CD4-positive, alpha-beta T cell (primary cell): ENCODE measurements at regions of chr11 and their contacts with region 1.

Region 1: GRCh38 chr11:85854557-85855340 is 434 bp upstream of the CCDC83 start:
- DNase-seq: peak; percentile 76 to 96 (median 89)
- ATAC-seq: peak; percentile 97
- H3K4me3 ChIP-seq: peak overlapping the region; percentile 70
- H3K4me3 Mint-ChIP-seq: peak overlapping the region; percentile 91
- H3K27ac ChIP-seq: peak overlapping the region; percentile 68 to 75
- H3K27ac Mint-ChIP-seq: peak overlapping the region; percentile 93
- H3K4me1 ChIP-seq: peaks cover 12% of the 10 kb centered on the region
- H3K4me1 Mint-ChIP-seq: peaks cover 13% of the 10 kb centered on the region
- H3K27me3 ChIP-seq: no peaks in the 10 kb centered on the region
- H3K27me3 Mint-ChIP-seq: no peaks in the 10 kb centered on the region
- CTCF ChIP-seq: peak; percentile 87

Region 2: DNA sequence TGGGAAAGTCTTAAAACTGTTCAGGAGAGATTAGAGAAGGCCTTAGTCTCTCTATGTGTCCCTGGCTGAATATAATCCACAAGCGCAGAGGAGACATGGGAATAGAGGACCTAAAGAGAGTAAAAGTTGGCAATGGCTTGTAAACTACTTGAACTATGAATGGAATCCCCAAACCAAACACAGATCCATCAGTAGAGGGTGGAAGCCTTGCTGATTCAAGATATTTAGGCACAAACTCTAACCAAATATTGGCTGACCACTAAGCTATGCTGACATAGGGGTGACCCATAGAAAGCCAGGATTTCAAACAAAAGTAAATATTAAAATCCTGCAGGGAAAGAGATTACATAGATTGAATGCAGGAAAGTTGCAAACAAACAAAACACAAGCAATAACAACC is 666.8 kb before region 1 on chr11:
- CTCF ChIA-PET with region 1: no interaction called
- POLR2A ChIA-PET with region 1: no interaction called
- intact Hi-C with region 1: no loop called
- DNase-seq: no peak
- ATAC-seq: no peak
- H3K4me3 ChIP-seq: no peak overlapping the region
- H3K4me3 Mint-ChIP-seq: no peak overlapping the region
- H3K27ac ChIP-seq: no peak overlapping the region
- H3K27ac Mint-ChIP-seq: no peak overlapping the region
- H3K4me1 ChIP-seq: no peaks in the 10 kb centered on the region
- H3K4me1 Mint-ChIP-seq: no peaks in the 10 kb centered on the region
- H3K27me3 ChIP-seq: no peaks in the 10 kb centered on the region
- H3K27me3 Mint-ChIP-seq: no peaks in the 10 kb centered on the region
- CTCF ChIP-seq: no peak

Region 3: GRCh38 chr11:85572056-85572455 is 282.7 kb before region 1 on chr11:
- CTCF ChIA-PET with region 1: no interaction called
- POLR2A ChIA-PET with region 1: no interaction called
- intact Hi-C with region 1: no loop called
- DNase-seq: no peak
- ATAC-seq: no peak
- H3K4me3 ChIP-seq: no peak overlapping the region
- H3K4me3 Mint-ChIP-seq: no peak overlapping the region
- H3K27ac ChIP-seq: no peak overlapping the region
- H3K27ac Mint-ChIP-seq: no peak overlapping the region
- H3K4me1 ChIP-seq: no peaks in the 10 kb centered on the region
- H3K4me1 Mint-ChIP-seq: no peaks in the 10 kb centered on the region
- H3K27me3 ChIP-seq: peaks cover 0 to 6% of the 10 kb centered on the region in 2 experiments
- H3K27me3 Mint-ChIP-seq: peaks cover 31% of the 10 kb centered on the region
- CTCF ChIP-seq: no peak

Region 4: GRCh38 chr11:85595285-85595884 is 259.4 kb before region 1 on chr11:
- CTCF ChIA-PET with region 1: no interaction called
- POLR2A ChIA-PET with region 1: interaction called, 3 read pairs
- intact Hi-C with region 1: loop called in 1 of 2 experiments (anchors 5 kb)
- DNase-seq: peak in 3 of 14 experiments; percentile 64 to 73 (median 72)
- ATAC-seq: peak; percentile 60
- H3K4me3 ChIP-seq: no peak overlapping the region
- H3K4me3 Mint-ChIP-seq: no peak overlapping the region
- H3K27ac ChIP-seq: no peak overlapping the region
- H3K27ac Mint-ChIP-seq: no peak overlapping the region
- H3K4me1 ChIP-seq: no peaks in the 10 kb centered on the region
- H3K4me1 Mint-ChIP-seq: no peaks in the 10 kb centered on the region
- H3K27me3 ChIP-seq: no peaks in the 10 kb centered on the region
- H3K27me3 Mint-ChIP-seq: no peaks in the 10 kb centered on the region
- CTCF ChIP-seq: peak; percentile 86

Region 5: DNA sequence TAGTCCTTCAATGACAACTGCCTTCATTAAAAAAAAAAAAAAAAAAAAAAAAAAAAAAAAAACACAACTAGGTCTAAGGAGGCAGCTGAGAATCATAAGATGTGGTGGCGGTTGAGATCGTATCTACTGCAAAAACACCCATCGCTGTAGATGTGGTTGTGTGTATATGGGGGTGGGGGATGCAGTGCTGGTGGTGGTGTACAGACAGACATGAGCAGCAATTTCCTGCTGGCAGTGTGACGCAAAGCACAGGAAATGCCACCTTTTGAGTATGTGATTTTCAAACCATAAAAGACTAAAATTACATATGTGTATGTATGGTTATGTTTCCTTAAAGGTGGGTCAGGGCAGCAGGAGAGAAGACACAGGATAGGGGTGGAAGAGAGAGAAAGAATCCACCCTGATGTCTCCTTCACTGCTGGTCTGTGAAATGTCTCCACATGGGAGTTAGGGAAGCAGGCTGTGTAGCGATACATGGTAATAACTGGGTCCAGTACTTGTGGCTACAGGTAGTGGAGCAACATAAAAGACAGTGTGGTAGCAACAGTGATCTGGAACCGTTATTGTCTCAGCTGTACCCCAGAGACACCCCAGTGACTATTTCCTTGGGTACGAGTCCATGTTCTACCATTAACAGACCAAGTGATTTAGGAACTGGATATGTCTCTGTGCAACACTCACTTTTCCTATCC is 101.7 kb before region 1 on chr11:
- CTCF ChIA-PET with region 1: interaction called, 15 read pairs
- POLR2A ChIA-PET with region 1: interaction called, 6 read pairs
- intact Hi-C with region 1: loop called in 1 of 2 experiments (anchors 1 kb)
- DNase-seq: peak; percentile 70 to 99 (median 84)
- ATAC-seq: peak; percentile 84
- H3K4me3 ChIP-seq: peak overlapping the region; percentile 32
- H3K4me3 Mint-ChIP-seq: peak overlapping the region; percentile 87
- H3K27ac ChIP-seq: peak overlapping the region; percentile 52 to 66
- H3K27ac Mint-ChIP-seq: peak overlapping the region; percentile 91
- H3K4me1 ChIP-seq: peaks cover 77% of the 10 kb centered on the region
- H3K4me1 Mint-ChIP-seq: peaks cover 95% of the 10 kb centered on the region
- H3K27me3 ChIP-seq: no peaks in the 10 kb centered on the region
- H3K27me3 Mint-ChIP-seq: peaks cover 7% of the 10 kb centered on the region
- CTCF ChIP-seq: peak; percentile 22

Region 6: GRCh38 chr11:85772695-85773094 is 82.1 kb before region 1 on chr11:
- CTCF ChIA-PET with region 1: no interaction called
- POLR2A ChIA-PET with region 1: no interaction called
- intact Hi-C with region 1: no loop called
- DNase-seq: no peak
- ATAC-seq: no peak
- H3K4me3 ChIP-seq: no peak overlapping the region
- H3K4me3 Mint-ChIP-seq: no peak overlapping the region
- H3K27ac ChIP-seq: no peak overlapping the region
- H3K27ac Mint-ChIP-seq: no peak overlapping the region
- H3K4me1 ChIP-seq: peaks cover 7% of the 10 kb centered on the region
- H3K4me1 Mint-ChIP-seq: peaks cover 39% of the 10 kb centered on the region
- H3K27me3 ChIP-seq: no peaks in the 10 kb centered on the region
- H3K27me3 Mint-ChIP-seq: no peaks in the 10 kb centered on the region
- CTCF ChIP-seq: no peak

Region 7: DNA sequence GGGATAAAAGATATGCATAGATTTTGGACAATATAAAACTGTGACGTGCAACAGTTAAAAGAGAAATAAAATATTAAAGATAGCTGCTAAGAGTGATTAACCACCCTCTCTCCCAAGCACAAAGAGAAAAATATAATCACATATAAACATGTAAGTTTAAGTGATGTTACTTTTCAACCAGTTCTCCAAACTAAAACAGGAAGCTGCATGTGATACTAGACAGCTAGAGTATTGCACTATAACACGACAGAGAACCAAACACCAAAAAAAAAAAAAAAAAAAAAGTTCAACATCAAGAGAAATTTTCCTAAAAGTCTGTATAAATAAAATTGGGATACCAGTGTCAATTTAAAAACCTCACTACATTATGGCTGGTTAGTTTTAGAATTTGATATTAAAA is 135.0 kb after region 1 on chr11:
- CTCF ChIA-PET with region 1: interaction called, 3 read pairs
- POLR2A ChIA-PET with region 1: no interaction called
- intact Hi-C with region 1: loop called in 1 of 2 experiments (anchors 10 kb)
- DNase-seq: no peak
- ATAC-seq: no peak
- H3K4me3 ChIP-seq: no peak overlapping the region
- H3K4me3 Mint-ChIP-seq: no peak overlapping the region
- H3K27ac ChIP-seq: no peak overlapping the region
- H3K27ac Mint-ChIP-seq: no peak overlapping the region
- H3K4me1 ChIP-seq: no peaks in the 10 kb centered on the region
- H3K4me1 Mint-ChIP-seq: peaks cover 5% of the 10 kb centered on the region
- H3K27me3 ChIP-seq: no peaks in the 10 kb centered on the region
- H3K27me3 Mint-ChIP-seq: no peaks in the 10 kb centered on the region
- CTCF ChIP-seq: no peak

Region 8: DNA sequence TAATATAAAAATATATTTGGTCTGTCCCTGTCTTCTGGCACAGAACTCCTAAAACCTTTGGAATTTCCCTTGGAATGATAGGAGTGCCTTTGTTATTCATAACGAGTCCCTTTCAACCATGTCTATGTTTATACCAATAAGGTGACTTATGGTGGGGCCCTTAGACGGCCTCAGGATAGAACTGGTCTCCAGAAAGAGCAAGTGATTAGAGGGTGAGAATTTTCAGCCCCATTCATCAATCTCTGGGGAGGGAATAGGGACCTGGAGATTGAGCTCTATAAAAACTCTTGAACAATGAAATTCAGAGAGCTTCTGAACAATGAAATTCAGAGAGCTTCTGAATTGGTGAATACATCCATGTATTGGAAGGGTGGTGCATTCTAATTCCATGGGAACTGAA is 232.5 kb after region 1 on chr11:
- CTCF ChIA-PET with region 1: no interaction called
- POLR2A ChIA-PET with region 1: no interaction called
- intact Hi-C with region 1: no loop called
- DNase-seq: no peak
- ATAC-seq: no peak
- H3K4me3 ChIP-seq: no peak overlapping the region
- H3K4me3 Mint-ChIP-seq: no peak overlapping the region
- H3K27ac ChIP-seq: no peak overlapping the region
- H3K27ac Mint-ChIP-seq: no peak overlapping the region
- H3K4me1 ChIP-seq: no peaks in the 10 kb centered on the region
- H3K4me1 Mint-ChIP-seq: no peaks in the 10 kb centered on the region
- H3K27me3 ChIP-seq: no peaks in the 10 kb centered on the region
- H3K27me3 Mint-ChIP-seq: peaks cover 8% of the 10 kb centered on the region
- CTCF ChIP-seq: no peak

Region 9: DNA sequence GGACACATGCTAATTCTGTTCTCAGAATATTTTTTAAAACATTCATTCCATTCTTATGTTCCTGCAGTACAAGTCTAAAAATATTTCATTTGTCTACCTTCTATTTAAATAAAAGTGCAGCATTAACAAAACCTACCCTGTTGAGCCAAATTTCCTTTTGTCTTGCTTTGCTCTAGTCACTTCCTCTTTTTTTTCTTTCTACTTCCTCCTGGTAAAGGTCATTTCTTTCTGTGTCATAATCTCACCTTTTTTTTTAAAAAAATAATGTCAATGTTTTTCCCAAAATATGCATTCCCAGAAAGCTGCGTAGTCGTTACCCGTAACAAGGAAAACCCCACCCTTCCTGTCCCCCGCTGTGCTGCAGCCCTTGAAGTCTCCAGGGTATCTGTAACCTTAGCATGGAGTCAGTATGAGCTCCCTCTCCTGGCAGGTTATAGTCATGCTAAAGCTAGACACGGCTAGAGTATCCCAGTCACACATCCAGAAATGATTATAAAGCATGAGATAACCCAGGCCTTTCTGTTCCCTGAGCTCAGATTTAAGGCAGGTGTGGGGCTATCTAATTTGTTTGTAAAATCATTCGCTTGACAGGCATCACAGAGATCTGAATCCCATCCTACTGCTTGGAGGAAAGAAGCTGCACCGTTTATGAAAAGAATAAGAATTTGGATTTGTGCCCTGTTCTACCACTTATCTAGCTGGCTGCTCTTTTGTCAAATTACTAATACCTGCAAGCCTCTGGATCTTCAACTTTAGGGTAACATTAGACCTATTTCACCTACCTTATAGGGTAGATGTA is 338.7 kb after region 1 on chr11:
- CTCF ChIA-PET with region 1: interaction called, 14 read pairs
- POLR2A ChIA-PET with region 1: interaction called, 7 read pairs
- intact Hi-C with region 1: loop called (anchors 1 to 2 kb)
- DNase-seq: peak; percentile 18 to 84 (median 42)
- ATAC-seq: peak; percentile 100
- H3K4me3 ChIP-seq: peak overlapping the region; percentile 37
- H3K4me3 Mint-ChIP-seq: peak overlapping the region; percentile 94
- H3K27ac ChIP-seq: no peak overlapping the region
- H3K27ac Mint-ChIP-seq: peak overlapping the region; percentile 69
- H3K4me1 ChIP-seq: peaks cover 4% of the 10 kb centered on the region
- H3K4me1 Mint-ChIP-seq: peaks cover 15% of the 10 kb centered on the region
- H3K27me3 ChIP-seq: no peaks in the 10 kb centered on the region
- H3K27me3 Mint-ChIP-seq: no peaks in the 10 kb centered on the region
- CTCF ChIP-seq: peak; percentile 74

Region 10: GRCh38 chr11:86818466-86819192 is 963.9 kb after region 1 on chr11:
- CTCF ChIA-PET with region 1: no interaction called
- POLR2A ChIA-PET with region 1: no interaction called
- intact Hi-C with region 1: loop called (anchors 2 to 5 kb)
- DNase-seq: peak in 3 of 14 experiments; percentile 58 to 64 (median 63)
- ATAC-seq: no peak
- H3K4me3 ChIP-seq: no peak overlapping the region
- H3K4me3 Mint-ChIP-seq: no peak overlapping the region
- H3K27ac ChIP-seq: no peak overlapping the region
- H3K27ac Mint-ChIP-seq: no peak overlapping the region
- H3K4me1 ChIP-seq: no peaks in the 10 kb centered on the region
- H3K4me1 Mint-ChIP-seq: peaks cover 5% of the 10 kb centered on the region
- H3K27me3 ChIP-seq: peaks cover 0 to 5% of the 10 kb centered on the region in 2 experiments
- H3K27me3 Mint-ChIP-seq: peaks cover 7% of the 10 kb centered on the region
- CTCF ChIP-seq: peak; percentile 79